Heart left ventricle (tissue), 16 donors: ENCODE measurements at regions of chr16 and their contacts with region 1.

Region 1: GRCh38 chr16:31458844-31459721 is at the start of gene ARMC5:
- DNase-seq: peak; percentile 98 to 99 (median 98)
- ATAC-seq: peak; percentile 82 to 90 (median 88)
- H3K4me3 ChIP-seq: peak within 1 kb of the TSS; percentile 57 to 93 (median 80)
- H3K27ac ChIP-seq: peak within 1 kb of the TSS; percentile 94 to 100 (median 99)
- H3K4me1 ChIP-seq: peaks cover 0 to 57% (median 43%) of the 10 kb centered on the region in 12 donors
- H3K27me3 ChIP-seq: no peaks in the 10 kb centered on the region
- CTCF ChIP-seq: peak; percentile 39 to 83 (median 62)
- POLR2A ChIP-seq: peak in 1 of 2 donors; percentile 19
- total RNA-seq, gene ARMC5: 4.1 to 9.2 (median 6.5) TPM

Region 2: GRCh38 chr16:30957456-30958174 is 501.5 kb before region 1 on chr16 and contains the start of gene SETD1A:
- intact Hi-C with region 1: loop called in 2 of 10 experiments (anchors 5 to 10 kb)
- DNase-seq: peak; percentile 98 to 99 (median 98)
- ATAC-seq: peak; percentile 90 to 96 (median 91)
- H3K4me3 ChIP-seq: peak within 1 kb of the TSS; percentile 37 to 93 (median 82)
- H3K27ac ChIP-seq: peak within 1 kb of the TSS; percentile 86 to 99 (median 98)
- H3K4me1 ChIP-seq: peaks cover 0 to 37% (median 24%) of the 10 kb centered on the region in 12 donors
- H3K27me3 ChIP-seq: no peaks in the 10 kb centered on the region
- CTCF ChIP-seq: peak in 1 of 12 donors; percentile 7
- POLR2A ChIP-seq: peak in 1 of 2 donors; percentile 44
- total RNA-seq, gene SETD1A: 4.6 to 12.1 (median 9.0) TPM

Region 3: DNA sequence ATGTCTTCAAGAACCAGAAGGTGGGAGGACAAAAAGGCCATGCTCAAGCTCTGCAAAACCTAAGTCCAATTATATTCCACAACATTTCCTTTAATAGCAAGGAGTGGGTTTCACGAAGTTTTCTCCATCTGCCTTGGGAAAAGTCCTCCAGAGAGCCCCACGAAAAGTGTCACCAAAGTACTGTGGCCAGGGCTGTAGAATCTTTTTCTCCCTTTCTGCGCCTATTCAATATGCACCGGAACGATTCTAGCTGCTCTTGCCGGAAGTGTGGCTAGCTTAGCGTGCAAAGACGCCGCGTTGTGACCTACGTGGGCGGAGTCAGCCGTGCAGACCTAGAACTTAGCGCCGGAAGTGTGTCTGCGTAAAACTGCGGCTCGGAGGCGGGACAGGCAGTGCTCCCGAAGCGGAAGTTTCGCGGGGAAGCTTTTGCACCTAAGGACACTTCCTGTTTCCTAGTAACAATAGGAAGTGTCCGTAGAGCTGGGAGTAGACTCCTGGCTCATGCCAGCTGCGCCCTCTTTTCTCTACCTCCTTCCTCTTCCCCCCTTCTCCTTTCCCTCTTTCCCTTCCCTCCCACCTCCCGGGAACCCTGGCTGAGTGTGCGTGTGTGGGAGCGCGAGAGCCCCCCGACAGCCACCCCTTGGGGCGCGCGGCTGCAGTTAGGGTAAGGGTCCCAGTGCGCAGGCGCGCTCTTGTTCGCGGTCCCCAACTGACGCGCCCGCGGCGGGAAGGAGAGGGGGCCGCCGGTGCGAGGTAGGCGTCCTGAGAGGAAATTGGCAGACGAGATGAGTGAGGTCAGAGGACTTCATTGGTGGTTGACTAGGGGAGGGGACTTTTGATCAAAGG is 384.9 kb before region 1 on chr16 and contains the starts of genes ZNF646 and ZNF668:
- intact Hi-C with region 1: loop called in 1 of 10 experiments (anchors 10 kb)
- DNase-seq: peak; percentile 98 to 99 (median 99)
- ATAC-seq: peak; percentile 94 to 97 (median 96)
- H3K4me3 ChIP-seq: peak within 1 kb of the TSS; percentile 66 to 100 (median 84)
- H3K27ac ChIP-seq: peak within 1 kb of the TSS; percentile 87 to 99 (median 96)
- H3K4me1 ChIP-seq: peaks cover 3 to 39% (median 24%) of the 10 kb centered on the region in 12 donors
- H3K27me3 ChIP-seq: no peaks in the 10 kb centered on the region
- CTCF ChIP-seq: peak in 1 of 12 donors; percentile 8
- POLR2A ChIP-seq: peak in 1 of 2 donors; percentile 65
- total RNA-seq, gene ZNF646: 8.3 to 15.5 (median 10.3) TPM
- total RNA-seq, gene ZNF668: 3.5 to 11.4 (median 5.8) TPM

Region 4: DNA sequence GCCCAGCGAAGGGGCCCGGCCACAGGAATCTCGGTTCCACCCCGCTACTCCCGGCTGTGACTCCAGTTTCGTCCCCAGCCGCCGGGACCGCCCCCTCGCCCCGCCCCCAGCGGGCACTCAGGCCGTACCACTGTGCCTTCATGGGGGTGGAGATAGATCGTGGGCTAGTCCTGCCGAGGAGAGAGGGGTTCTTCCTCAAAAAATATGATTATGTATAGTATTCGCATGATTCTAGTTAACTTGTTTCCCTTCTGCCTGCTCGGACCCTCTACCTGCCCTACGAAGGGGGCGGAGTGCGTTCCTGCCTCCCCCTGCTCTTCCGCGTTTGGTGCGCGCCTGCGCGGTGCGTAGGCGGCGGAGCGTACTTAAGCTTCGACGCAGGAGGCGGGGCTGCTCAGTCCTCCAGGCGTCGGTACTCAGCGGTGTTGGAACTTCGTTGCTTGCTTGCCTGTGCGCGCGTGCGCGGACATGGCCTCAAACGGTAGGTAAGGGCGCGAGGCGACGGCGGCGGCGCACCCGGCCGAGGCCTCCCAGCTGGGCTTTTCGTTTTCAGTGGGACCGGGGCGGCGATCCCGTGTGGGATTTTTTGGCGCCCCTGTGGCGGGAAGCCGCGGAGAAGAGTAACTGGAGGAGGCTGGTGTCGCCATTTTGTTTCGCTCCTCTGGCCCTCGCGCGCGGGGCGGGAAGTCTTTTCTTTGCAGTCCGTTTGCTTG is 279.2 kb before region 1 on chr16 and contains the start of gene FUS:
- intact Hi-C with region 1: loop called in 3 of 10 experiments (anchors 5 to 10 kb)
- DNase-seq: peak; percentile 91 to 96 (median 93)
- ATAC-seq: peak; percentile 84 to 90 (median 88)
- H3K4me3 ChIP-seq: peak within 1 kb of the TSS; percentile 60 to 99 (median 86)
- H3K27ac ChIP-seq: peak within 1 kb of the TSS; percentile 87 to 99 (median 94)
- H3K4me1 ChIP-seq: peaks cover 0 to 47% (median 37%) of the 10 kb centered on the region in 12 donors
- H3K27me3 ChIP-seq: peaks cover 0 to 5% (median 0%) of the 10 kb centered on the region in 9 donors
- CTCF ChIP-seq: peak in 1 of 12 donors; percentile 8
- POLR2A ChIP-seq: peak; percentile 67 to 96
- total RNA-seq, gene FUS: 20.3 to 213 (median 127) TPM

Region 5: GRCh38 chr16:31325171-31325570 is 133.9 kb before region 1 on chr16:
- intact Hi-C with region 1: no loop called
- DNase-seq: no peak
- ATAC-seq: no peak
- H3K4me3 ChIP-seq: no peak overlapping the region
- H3K27ac ChIP-seq: no peak overlapping the region
- H3K4me1 ChIP-seq: no peaks in the 10 kb centered on the region
- H3K27me3 ChIP-seq: peaks cover 0 to 33% (median 11%) of the 10 kb centered on the region in 9 donors
- CTCF ChIP-seq: no peak
- POLR2A ChIP-seq: no peak

Region 6: GRCh38 chr16:31502981-31503380 is 43.9 kb after region 1 on chr16:
- intact Hi-C with region 1: loop called in 4 of 10 experiments (anchors 1 to 10 kb)
- DNase-seq: no peak
- ATAC-seq: no peak
- H3K4me3 ChIP-seq: no peak overlapping the region
- H3K27ac ChIP-seq: peak overlapping the region in 1 of 12 donors; percentile 61
- H3K4me1 ChIP-seq: peaks cover 4 to 58% (median 39%) of the 10 kb centered on the region in 12 donors
- H3K27me3 ChIP-seq: no peaks in the 10 kb centered on the region
- CTCF ChIP-seq: no peak
- POLR2A ChIP-seq: no peak

Region 7: GRCh38 chr16:31700526-31701388 is 241.7 kb after region 1 on chr16:
- intact Hi-C with region 1: loop called in 1 of 10 experiments (anchors 2 kb)
- DNase-seq: peak; percentile 78 to 90 (median 84)
- ATAC-seq: peak; percentile 94 to 99 (median 95)
- H3K4me3 ChIP-seq: peak overlapping the region; percentile 54 to 93 (median 75)
- H3K27ac ChIP-seq: peak overlapping the region in 7 of 12 donors; percentile 1 to 72 (median 57)
- H3K4me1 ChIP-seq: peaks cover 0 to 21% (median 8%) of the 10 kb centered on the region in 12 donors
- H3K27me3 ChIP-seq: peaks cover 0 to 5% (median 0%) of the 10 kb centered on the region in 9 donors
- CTCF ChIP-seq: peak in 6 of 12 donors; percentile 7 to 40 (median 20)
- POLR2A ChIP-seq: peak in 1 of 2 donors; percentile 12

Region 8: DNA sequence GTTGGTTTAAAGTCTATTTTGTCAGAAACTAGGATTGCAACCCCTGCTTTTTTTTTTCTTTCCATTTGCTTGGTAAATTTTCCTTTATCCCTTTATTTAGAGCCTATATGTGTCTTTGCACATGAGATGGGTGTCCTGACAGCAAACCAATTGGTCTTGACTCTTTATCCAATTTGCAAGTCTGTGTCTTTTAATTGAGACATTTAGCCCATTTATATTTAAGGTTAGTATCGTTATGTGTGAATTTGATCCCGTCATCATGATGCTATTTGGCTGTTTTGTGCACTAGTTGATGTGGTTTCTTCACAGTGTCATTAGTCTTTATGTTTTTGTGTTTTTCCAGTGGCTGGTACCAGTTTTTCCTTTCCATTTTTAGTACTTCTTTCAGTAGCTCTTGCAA is 286.8 kb after region 1 on chr16:
- intact Hi-C with region 1: no loop called
- DNase-seq: no peak
- ATAC-seq: no peak
- H3K4me3 ChIP-seq: no peak overlapping the region
- H3K27ac ChIP-seq: no peak overlapping the region
- H3K4me1 ChIP-seq: no peaks in the 10 kb centered on the region
- H3K27me3 ChIP-seq: no peaks in the 10 kb centered on the region
- CTCF ChIP-seq: no peak
- POLR2A ChIP-seq: no peak

Region 9: DNA sequence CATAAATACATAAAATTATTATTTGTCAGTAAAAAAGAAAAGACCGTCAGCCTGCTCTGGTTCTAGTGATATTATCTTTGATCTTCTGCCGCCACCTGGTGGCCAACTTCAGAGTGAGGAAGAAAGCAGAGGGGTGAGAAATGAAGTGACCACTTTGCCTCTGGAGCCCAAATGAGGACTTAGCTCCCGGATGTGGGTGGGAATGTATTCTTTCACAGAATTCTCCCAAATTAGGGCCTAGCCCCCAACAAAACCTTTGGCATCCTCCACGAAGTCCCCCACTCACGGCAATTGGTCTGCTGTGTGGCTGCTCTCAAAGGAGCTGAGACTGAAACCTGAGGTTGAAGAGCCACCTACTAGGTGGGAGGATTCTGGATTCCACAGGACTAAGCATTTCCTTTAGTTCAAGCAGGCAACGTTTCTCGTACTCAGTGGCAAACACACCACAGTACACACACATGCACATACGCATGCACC is 409.6 kb after region 1 on chr16:
- intact Hi-C with region 1: loop called in 6 of 10 experiments (anchors 5 to 10 kb)
- DNase-seq: peak; percentile 72 to 84 (median 77)
- ATAC-seq: peak in 3 of 4 donors; percentile 55 to 69 (median 64)
- H3K4me3 ChIP-seq: peak overlapping the region in 2 of 12 donors; percentile 13 to 37
- H3K27ac ChIP-seq: peak overlapping the region in 4 of 12 donors; percentile 14 to 91 (median 18)
- H3K4me1 ChIP-seq: peaks cover 0 to 36% (median 8%) of the 10 kb centered on the region in 12 donors
- H3K27me3 ChIP-seq: no peaks in the 10 kb centered on the region
- CTCF ChIP-seq: peak; percentile 75 to 89 (median 80)
- POLR2A ChIP-seq: no peak